Panc1 (cell line): ENCODE measurements at regions of chr11 and their contacts with region 1.

Region 1: DNA sequence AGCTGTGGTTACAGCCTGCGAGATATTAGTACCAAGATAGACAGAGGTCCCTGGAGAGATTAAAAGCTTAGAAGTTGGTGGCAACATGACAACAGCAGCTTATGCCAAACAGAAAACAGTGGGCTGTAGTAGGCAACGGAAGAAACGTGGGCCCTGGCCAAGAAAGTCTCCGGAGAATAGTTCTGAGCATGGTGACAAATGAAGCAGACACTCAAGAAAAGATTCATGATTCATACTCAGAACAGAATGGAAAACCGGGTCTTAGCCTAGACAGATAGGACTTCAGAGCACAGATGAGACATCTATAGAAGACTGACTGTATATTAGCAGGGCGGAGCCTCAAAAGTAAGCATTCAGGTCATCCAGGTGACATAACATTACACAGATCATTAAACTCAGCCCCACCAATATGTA is 727.4 kb downstream of the ETS1 start:
- DNase-seq: no peak
- ATAC-seq: no peak
- H3K4me3 ChIP-seq: no peak overlapping the region
- H3K27ac ChIP-seq: no peak overlapping the region
- H3K4me1 ChIP-seq: no peaks in the 10 kb centered on the region
- H3K27me3 ChIP-seq: no peaks in the 10 kb centered on the region; the same call in 1 of the 2 replicates
- CTCF ChIP-seq: no peak

Region 2: GRCh38 chr11:126344156-126345010 is 1515.6 kb before region 1 on chr11:
- CTCF ChIA-PET with region 1: interaction called, 10 read pairs
- POLR2A ChIA-PET with region 1: no interaction called
- in situ Hi-C with region 1: no loop called
- intact Hi-C with region 1: no loop called
- DNase-seq: no peak
- ATAC-seq: no peak
- H3K4me3 ChIP-seq: no peak overlapping the region
- H3K27ac ChIP-seq: no peak overlapping the region
- H3K4me1 ChIP-seq: peaks cover 13% of the 10 kb centered on the region
- H3K27me3 ChIP-seq: no peaks in the 10 kb centered on the region
- CTCF ChIP-seq: no peak